A549 (cell line): ENCODE measurements at regions of chr14 and their contacts with region 1.

Region 1: DNA sequence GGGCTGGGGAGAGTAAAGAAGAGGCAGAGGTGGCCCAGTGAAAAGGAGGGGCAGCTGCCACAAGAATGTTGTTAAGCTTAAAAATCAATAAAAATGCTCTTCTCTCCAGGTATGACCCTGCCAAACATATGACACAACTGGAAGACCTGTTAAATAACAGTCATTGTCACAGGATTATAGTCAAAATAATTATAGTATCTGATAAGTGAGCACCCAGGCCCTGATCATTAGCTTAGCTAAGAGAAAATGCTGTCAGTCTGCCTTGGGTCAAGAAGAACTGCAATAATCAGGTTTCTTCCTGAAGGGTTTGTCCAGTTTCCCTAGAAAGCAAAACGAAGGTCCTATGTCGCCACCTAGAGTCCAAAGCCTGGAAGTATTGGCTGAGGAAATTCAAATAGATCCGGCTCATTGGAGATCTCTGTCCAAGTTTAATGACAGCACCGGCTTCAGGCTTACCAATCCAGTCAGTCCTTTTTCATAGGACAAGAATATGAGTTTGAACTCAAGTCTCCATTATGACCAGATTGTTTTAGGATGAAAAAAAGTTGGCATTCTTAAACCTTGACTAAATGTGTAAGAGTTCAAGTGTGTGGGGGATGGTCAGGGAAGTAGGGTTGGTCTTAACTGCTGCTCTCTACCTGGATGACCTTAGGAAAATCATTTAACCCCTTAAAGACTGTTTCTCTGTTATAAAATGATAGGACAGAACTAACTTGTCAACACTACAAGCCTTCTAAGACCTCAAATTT is 22.5 kb upstream of the NKX2-8 start:
- DNase-seq: peak; percentile 71 to 80
- ATAC-seq: peak; percentile 80 to 91
- H3K4me3 ChIP-seq: no peak overlapping the region
- H3K27ac ChIP-seq: no peak overlapping the region
- H3K4me1 ChIP-seq: 0 out of 3 replicates have a peak, but pooled peaks cover 3% of the 10 kb centered on the region
- CTCF ChIP-seq: peak; percentile 82
- EP300 ChIP-seq: no peak
- POLR2A ChIP-seq: no peak
- RAD21 ChIP-seq: peak; percentile 83 to 85

Region 2: DNA sequence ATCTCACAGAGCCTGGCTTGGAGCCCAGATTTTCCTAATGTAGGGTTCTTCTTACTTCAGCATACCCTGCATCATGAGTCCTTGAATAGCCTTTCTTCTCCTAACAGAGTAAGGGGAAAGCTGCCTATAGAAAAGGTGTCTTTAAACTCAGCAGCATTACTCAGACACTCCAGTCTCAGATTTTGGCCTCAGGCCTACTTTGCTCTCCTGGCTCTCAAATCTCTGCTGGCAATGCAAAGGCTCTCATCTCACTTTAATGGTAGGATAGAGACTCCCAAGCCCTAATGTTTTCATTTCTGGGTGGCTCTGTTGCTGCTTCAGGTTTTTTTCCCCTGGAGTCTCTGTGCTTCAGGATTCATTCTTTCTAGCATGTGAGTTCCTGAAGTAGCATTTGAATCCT is 13.4 kb before region 1 on chr14:
- CTCF ChIA-PET with region 1: interaction called, 31 read pairs
- POLR2A ChIA-PET with region 1: no interaction called
- DNase-seq: no peak
- ATAC-seq: no peak
- H3K4me3 ChIP-seq: no peak overlapping the region
- H3K27ac ChIP-seq: no peak overlapping the region
- H3K4me1 ChIP-seq: no peaks in the 10 kb centered on the region
- CTCF ChIP-seq: no peak
- EP300 ChIP-seq: no peak
- POLR2A ChIP-seq: no peak
- RAD21 ChIP-seq: no peak

Region 3: DNA sequence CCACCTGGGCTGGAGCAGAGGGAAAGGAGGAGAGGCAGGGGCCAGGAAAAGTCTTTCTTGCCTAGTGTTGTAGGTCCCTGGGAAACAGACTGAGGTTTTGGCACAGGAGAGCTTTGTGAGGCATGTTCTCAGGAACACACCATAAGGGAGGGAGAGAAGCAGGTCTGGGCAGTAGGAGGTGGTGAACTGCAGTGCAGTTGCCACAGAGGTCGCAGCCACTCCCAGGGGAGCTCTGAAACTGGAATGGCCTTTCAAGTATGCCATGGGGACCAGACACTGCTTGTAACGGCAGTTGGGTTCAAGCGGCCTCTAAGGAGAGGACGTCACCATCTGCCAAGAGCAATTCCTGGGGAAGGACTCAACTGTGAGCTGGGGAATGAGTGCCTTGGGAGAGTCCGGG is 12.9 kb after region 1 on chr14:
- CTCF ChIA-PET with region 1: interaction called, 10 read pairs
- POLR2A ChIA-PET with region 1: no interaction called
- DNase-seq: no peak
- ATAC-seq: 0 out of 6 replicates have a peak, but pooled peaks of 1 of the 2 experiments have one; percentile 24
- H3K4me3 ChIP-seq: no peak overlapping the region
- H3K27ac ChIP-seq: no peak overlapping the region
- H3K4me1 ChIP-seq: no peaks in the 10 kb centered on the region
- CTCF ChIP-seq: no peak
- EP300 ChIP-seq: no peak
- POLR2A ChIP-seq: no peak
- RAD21 ChIP-seq: no peak

Region 4: DNA sequence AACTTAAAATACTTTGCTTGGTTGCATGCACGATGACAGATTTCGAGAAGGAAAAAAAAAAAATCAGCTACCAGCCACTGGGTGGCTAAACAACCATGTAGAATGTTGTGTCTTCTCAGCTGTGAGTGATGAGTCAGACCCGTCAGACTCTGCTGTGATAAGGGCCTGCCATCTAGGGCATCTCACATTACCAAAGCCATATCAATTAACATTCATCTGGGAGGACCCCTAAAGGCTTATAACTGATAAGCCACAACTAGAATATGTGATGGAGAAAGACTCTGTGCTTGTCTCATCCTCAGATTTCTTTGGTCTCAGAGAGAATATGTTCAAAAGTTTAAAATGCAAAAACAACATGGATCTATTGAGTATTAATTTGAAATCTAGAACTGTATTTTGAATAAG is 168.2 kb after region 1 on chr14:
- CTCF ChIA-PET with region 1: no interaction called
- POLR2A ChIA-PET with region 1: no interaction called
- DNase-seq: peak; percentile 44 to 66
- ATAC-seq: peak; percentile 96 to 99
- H3K4me3 ChIP-seq: no peak overlapping the region
- H3K27ac ChIP-seq: no peak overlapping the region
- H3K4me1 ChIP-seq: peaks cover 7% of the 10 kb centered on the region; the same call in 2 of the 3 replicates
- CTCF ChIP-seq: peak; percentile 44; the same call in 2 of the 3 replicates
- EP300 ChIP-seq: no peak
- POLR2A ChIP-seq: no peak
- RAD21 ChIP-seq: peak; percentile 32 to 43; a peak in 4 of 5 replicates